Activated B cell treated with CpG ODN at 0.5 μM for 24 hours (primary cell): ENCODE measurements at regions of chr7 and their contacts with region 1.

Region 1: DNA sequence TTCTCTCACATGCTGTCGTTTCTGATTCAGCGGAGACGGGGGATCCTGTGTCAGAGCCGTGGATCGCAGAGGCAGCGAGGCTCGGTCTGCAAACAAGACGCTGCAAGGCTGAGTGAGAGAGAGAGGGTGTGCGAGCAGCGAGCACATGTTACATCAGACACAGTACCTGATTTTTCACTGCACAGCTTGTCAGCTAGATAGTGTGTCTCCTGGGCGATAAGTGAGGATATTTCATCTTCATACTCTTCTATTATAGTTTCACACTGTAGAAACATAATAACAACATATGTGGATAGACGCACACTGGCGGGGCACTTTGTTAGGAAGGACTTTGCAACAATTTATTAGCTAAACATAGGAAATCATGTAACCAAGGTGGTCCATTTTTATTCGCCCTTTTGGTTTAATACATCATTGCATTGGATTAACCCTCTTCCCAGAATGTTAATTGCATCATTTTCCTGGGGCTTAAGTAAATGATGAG is 39.5 kb downstream of the CNPY1 start:
- DNase-seq: no peak
- ATAC-seq: no peak
- H3K4me3 Mint-ChIP-seq: no peak overlapping the region
- H3K27ac Mint-ChIP-seq: no peak overlapping the region
- H3K4me1 Mint-ChIP-seq: peaks cover 13% of the 10 kb centered on the region
- H3K27me3 Mint-ChIP-seq: peaks cover 68% of the 10 kb centered on the region
- CTCF ChIP-seq: no peak

Region 2: GRCh38 chr7:155456738-155457564 is 49.9 kb before region 1 on chr7:
- CTCF ChIA-PET with region 1: no interaction called
- POLR2A ChIA-PET with region 1: no interaction called
- intact Hi-C with region 1: loop called (anchors 2 kb)
- DNase-seq: no peak
- ATAC-seq: peak; percentile 47
- H3K4me3 Mint-ChIP-seq: peak overlapping the region; percentile 64
- H3K27ac Mint-ChIP-seq: no peak overlapping the region
- H3K4me1 Mint-ChIP-seq: peaks cover 26% of the 10 kb centered on the region
- H3K27me3 Mint-ChIP-seq: peaks cover 49% of the 10 kb centered on the region
- CTCF ChIP-seq: no peak

Region 3: GRCh38 chr7:155533827-155534690 is 27.2 kb after region 1 on chr7:
- CTCF ChIA-PET with region 1: no interaction called
- POLR2A ChIA-PET with region 1: no interaction called
- intact Hi-C with region 1: loop called (anchors 1 kb)
- DNase-seq: no peak
- ATAC-seq: peak; percentile 65
- H3K4me3 Mint-ChIP-seq: peak overlapping the region; percentile 69
- H3K27ac Mint-ChIP-seq: no peak overlapping the region
- H3K4me1 Mint-ChIP-seq: peaks cover 15% of the 10 kb centered on the region
- H3K27me3 Mint-ChIP-seq: peaks cover 66% of the 10 kb centered on the region
- CTCF ChIP-seq: no peak

Region 4: DNA sequence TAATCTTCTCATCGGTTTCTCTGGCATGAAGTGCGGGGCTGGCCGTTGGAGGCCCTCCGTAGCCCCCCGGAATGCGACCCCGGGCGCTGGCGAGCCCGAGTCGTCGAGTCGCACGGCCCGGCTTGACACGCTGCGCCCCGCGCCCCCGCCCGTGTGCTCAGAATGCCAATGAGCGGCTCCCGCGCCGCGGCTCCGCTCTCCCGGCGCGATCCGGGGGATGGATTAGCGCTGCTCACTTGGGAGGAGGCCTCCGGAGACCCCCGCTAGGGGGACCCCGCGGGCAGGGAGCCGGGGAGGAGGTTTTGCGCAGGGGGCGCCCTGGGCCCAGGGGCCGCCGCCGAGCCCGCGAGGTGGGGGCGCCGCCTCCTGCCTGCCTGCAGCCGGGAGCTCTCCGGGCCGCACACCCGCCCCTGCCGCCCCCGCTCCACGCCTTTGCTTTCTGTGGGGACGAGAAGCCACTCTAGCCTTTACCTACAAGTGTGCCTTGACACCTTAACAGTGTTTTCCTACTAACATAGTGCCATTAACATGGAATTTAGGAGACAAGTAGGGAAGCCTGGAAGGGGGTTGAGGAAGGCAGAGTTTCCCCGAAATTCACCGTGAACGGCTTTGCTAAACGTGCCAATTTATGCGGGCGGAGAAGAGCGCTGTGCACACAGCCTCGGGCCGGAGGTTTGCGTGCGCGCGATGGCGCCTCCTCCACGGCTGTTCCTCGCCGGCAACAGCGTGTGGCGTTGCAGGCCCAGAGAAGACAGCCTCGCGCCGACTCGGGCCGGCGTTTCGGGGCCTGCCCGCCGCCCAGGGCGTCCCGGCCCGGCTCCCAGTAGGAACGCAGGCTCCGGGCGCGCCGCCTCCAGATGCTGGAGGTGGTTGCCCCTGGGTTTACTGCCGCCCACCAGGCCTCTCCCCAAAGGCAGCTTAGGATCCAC is 298.3 kb after region 1 on chr7:
- CTCF ChIA-PET with region 1: no interaction called
- POLR2A ChIA-PET with region 1: no interaction called
- intact Hi-C with region 1: loop called (anchors 5 kb)
- DNase-seq: peak; percentile 63
- ATAC-seq: peak; percentile 77
- H3K4me3 Mint-ChIP-seq: peak overlapping the region; percentile 78
- H3K27ac Mint-ChIP-seq: no peak overlapping the region
- H3K4me1 Mint-ChIP-seq: peaks cover 26% of the 10 kb centered on the region
- H3K27me3 Mint-ChIP-seq: peaks cover 50% of the 10 kb centered on the region
- CTCF ChIP-seq: no peak

Region 5: DNA sequence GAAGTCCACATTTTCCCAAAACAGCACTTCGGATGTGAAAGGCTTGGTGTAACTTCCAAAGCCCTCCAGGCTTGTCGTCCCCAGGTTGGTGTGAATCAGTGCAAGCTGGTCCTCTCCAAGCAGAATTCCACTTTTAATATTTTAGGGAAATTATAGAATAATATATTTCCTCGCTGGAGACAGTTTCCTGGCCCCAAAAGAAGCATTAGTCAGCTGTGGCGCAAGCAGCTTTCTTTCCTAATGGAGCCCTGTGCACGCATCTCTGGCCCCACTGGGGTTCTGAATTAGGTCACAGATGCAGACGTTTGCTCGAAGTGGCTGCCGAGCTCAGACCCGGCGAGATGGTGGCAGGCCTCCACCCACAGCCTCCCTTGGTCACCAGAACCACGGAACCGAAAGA is 1536.8 kb after region 1 on chr7:
- CTCF ChIA-PET with region 1: no interaction called
- POLR2A ChIA-PET with region 1: no interaction called
- intact Hi-C with region 1: no loop called
- DNase-seq: no peak
- ATAC-seq: no peak
- H3K4me3 Mint-ChIP-seq: no peak overlapping the region
- H3K27ac Mint-ChIP-seq: no peak overlapping the region
- H3K4me1 Mint-ChIP-seq: no peaks in the 10 kb centered on the region
- H3K27me3 Mint-ChIP-seq: peaks cover 8% of the 10 kb centered on the region
- CTCF ChIP-seq: no peak